ENCODE measurements at regions of chr5 and their contacts with region 1.

Region 1: DNA sequence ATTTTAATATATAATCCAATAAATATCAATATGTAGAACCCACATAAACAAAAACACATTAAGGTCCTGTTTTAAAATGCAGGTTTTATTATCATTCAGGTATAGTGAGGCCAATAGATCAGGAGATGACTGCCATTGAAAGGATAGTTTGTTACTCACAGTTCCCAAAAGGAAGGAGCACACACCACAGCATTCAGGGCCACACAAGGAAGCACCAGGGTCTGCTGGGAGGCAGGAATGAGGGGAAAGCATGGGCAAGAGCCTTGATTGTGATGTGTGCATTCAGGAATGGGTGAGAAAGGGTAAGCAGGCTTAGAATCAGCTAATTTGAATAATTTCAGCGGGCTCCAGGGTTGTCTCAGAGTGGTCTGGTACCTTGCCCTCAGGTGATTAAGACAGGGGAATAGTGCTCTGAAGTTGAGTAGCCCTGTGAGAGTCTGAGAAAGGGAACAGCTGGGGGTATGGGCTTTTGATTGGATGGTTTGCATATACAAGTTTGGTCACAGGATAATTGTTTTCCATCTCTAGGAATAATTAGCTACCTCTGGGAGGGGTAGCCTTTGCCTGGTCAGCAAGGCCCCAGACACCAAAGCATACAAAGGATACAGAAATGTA is 19.8 kb upstream of the OTULIN start:
- DNase-seq: no peak
- H3K4me3 Mint-ChIP-seq: no peak overlapping the region
- H3K27ac Mint-ChIP-seq: no peak overlapping the region
- H3K4me1 Mint-ChIP-seq: no peaks in the 10 kb centered on the region
- H3K27me3 Mint-ChIP-seq: peaks cover 49% of the 10 kb centered on the region
- CTCF ChIP-seq: no peak

Region 2: GRCh38 chr5:13478831-13479465 is 1165.8 kb before region 1 on chr5:
- CTCF ChIA-PET with region 1: no interaction called
- intact Hi-C with region 1: loop called (anchors 10 kb)
- DNase-seq: peak; percentile 41
- H3K4me3 Mint-ChIP-seq: no peak overlapping the region
- H3K27ac Mint-ChIP-seq: no peak overlapping the region
- H3K4me1 Mint-ChIP-seq: no peaks in the 10 kb centered on the region
- H3K27me3 Mint-ChIP-seq: no peaks in the 10 kb centered on the region
- CTCF ChIP-seq: peak; percentile 54

Region 3: DNA sequence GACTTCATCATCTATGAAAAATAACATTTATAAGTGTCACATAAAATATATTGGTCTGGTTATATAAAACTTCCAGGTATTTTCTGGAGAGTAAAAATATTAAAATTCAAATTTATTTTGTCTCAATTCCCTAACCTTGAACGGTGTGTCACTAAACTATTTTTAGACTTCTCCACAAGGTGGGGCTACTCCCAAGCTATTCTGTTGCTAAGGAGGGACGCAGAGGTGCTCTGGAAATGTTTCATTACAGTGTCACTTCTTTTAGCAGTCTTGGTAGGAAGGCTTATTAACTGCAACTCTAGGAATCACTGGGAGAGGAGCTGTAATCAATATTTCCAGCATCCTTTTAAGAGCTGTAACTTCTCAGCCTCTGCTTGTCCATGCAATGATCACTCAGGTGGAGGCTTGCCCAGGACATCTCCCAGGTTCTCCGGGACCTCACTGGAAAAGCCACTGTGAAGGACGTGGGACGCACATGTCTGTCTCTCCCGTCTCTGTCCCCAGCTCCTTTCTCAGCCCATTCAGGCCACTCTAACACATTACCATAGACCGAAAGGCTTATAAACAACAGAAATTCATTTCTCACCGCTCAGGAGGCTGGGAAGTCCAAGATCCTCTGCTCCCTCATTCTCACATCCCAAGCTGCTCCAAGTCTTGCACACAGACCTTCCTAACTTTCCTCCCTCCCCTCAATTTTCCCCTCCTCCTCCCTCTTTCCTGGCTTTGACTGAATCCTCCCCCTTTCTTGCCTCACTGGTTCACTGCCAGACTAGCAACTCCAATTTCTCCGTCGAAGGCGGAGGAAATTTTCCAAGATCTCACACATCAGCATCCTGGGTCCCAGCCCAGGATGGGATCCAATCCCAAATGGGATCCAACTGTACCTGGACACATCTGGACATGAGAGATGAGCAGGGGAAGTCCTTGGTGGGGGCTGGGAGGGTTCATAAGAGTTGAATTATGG is 667.6 kb before region 1 on chr5:
- CTCF ChIA-PET with region 1: interaction called, 7 read pairs
- intact Hi-C with region 1: loop called (anchors 2 kb)
- DNase-seq: peak; percentile 67
- H3K4me3 Mint-ChIP-seq: no peak overlapping the region
- H3K27ac Mint-ChIP-seq: no peak overlapping the region
- H3K4me1 Mint-ChIP-seq: no peaks in the 10 kb centered on the region
- H3K27me3 Mint-ChIP-seq: no peaks in the 10 kb centered on the region
- CTCF ChIP-seq: peak; percentile 49

Region 4: GRCh38 chr5:14399054-14399692 is 245.6 kb before region 1 on chr5:
- CTCF ChIA-PET with region 1: interaction called, 8 read pairs
- intact Hi-C with region 1: loop called (anchors 1 kb)
- DNase-seq: no peak
- H3K4me3 Mint-ChIP-seq: no peak overlapping the region
- H3K27ac Mint-ChIP-seq: no peak overlapping the region
- H3K4me1 Mint-ChIP-seq: no peaks in the 10 kb centered on the region
- H3K27me3 Mint-ChIP-seq: no peaks in the 10 kb centered on the region
- CTCF ChIP-seq: no peak

Region 5: DNA sequence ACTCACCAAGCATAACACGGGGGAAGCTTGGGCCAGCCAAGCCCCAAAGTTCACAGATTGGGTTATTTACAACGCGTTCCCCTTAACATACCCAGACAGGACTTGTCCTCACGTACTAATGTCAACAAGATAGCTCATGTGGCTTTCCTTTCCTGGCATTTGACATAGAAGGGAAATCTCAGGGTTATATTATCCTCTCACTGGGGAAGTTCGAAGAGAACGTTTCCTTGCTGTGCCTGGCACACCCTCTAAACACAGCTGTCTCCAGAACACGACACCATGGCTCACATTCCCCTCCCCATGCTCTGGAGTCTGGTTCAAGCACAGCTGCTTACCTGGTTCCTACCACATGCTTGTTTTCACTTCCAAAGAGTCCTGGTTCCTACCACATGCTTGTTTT is 110.0 kb before region 1 on chr5:
- CTCF ChIA-PET with region 1: no interaction called
- intact Hi-C with region 1: loop called (anchors 5 kb)
- DNase-seq: no peak
- H3K4me3 Mint-ChIP-seq: no peak overlapping the region
- H3K27ac Mint-ChIP-seq: no peak overlapping the region
- H3K4me1 Mint-ChIP-seq: no peaks in the 10 kb centered on the region
- H3K27me3 Mint-ChIP-seq: peaks cover 13% of the 10 kb centered on the region
- CTCF ChIP-seq: no peak

Region 6: GRCh38 chr5:14983666-14984441 is 339.1 kb after region 1 on chr5:
- CTCF ChIA-PET with region 1: no interaction called
- intact Hi-C with region 1: no loop called
- DNase-seq: no peak
- H3K4me3 Mint-ChIP-seq: no peak overlapping the region
- H3K27ac Mint-ChIP-seq: no peak overlapping the region
- H3K4me1 Mint-ChIP-seq: peaks cover 6% of the 10 kb centered on the region
- H3K27me3 Mint-ChIP-seq: no peaks in the 10 kb centered on the region
- CTCF ChIP-seq: no peak

Measured in Calu3 (cell line).